Tibial artery (tissue), 4 donors: ENCODE measurements at regions of chr10 and their contacts with region 1.

Region 1: DNA sequence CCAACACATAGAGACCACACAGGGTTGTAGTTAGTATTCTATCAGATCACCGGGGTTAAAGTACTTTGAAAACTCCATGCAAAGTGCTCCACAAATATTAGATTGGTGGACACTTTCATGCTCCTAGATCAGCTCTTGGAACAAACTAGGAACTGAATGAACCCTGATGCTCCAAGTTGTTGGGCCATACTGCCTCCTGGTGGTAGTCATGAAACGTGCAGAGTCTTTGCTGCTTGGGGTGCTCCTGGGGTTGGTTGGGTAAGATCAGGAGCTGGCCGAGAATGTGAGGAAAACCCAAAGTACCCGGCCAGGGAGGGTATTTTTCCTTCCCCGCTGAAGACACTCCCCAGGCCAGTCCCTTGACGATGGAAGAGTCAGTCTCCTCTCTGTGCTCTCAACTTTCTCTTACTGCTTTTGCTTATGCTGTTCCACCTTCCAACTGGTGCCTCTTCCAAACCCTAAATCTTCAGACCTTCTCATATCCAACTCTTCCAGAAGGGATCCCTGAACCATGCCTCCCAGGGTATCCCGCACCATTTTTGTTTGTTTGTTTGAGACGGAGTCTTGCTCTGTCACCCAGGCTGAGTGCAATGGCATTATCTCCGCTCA is 920 bp upstream of the RPEL1 start:
- DNase-seq: peak; percentile 81 to 90
- H3K4me3 ChIP-seq: no peak overlapping the region
- H3K27ac ChIP-seq: no peak overlapping the region
- H3K4me1 ChIP-seq: peaks cover 0 to 15% (median 9%) of the 10 kb centered on the region in 4 donors
- H3K27me3 ChIP-seq: no peaks in the 10 kb centered on the region
- CTCF ChIP-seq: peak; percentile 79 to 92

Region 2: GRCh38 chr10:102729029-102730026 is 515.4 kb before region 1 on chr10:
- intact Hi-C with region 1: loop called (anchors 10 kb)
- DNase-seq: peak; percentile 88 to 93
- H3K4me3 ChIP-seq: no peak overlapping the region
- H3K27ac ChIP-seq: no peak overlapping the region
- H3K4me1 ChIP-seq: peaks cover 0 to 7% (median 0%) of the 10 kb centered on the region in 4 donors
- H3K27me3 ChIP-seq: no peaks in the 10 kb centered on the region
- CTCF ChIP-seq: peak; percentile 90 to 96

Region 3: GRCh38 chr10:102835007-102835482 is 409.7 kb before region 1 on chr10:
- intact Hi-C with region 1: loop called (anchors 10 kb)
- DNase-seq: peak; percentile 56 to 85
- H3K4me3 ChIP-seq: no peak overlapping the region
- H3K27ac ChIP-seq: no peak overlapping the region
- H3K4me1 ChIP-seq: peaks cover 0 to 14% (median 10%) of the 10 kb centered on the region in 4 donors
- H3K27me3 ChIP-seq: no peaks in the 10 kb centered on the region
- CTCF ChIP-seq: peak; percentile 80 to 84

Region 4: GRCh38 chr10:102917962-102918816 is 326.6 kb before region 1 on chr10 and contains the start of gene CNNM2:
- intact Hi-C with region 1: loop called (anchors 2 kb)
- DNase-seq: peak; percentile 100
- H3K4me3 ChIP-seq: peak within 1 kb of the TSS; percentile 90 to 93
- H3K27ac ChIP-seq: peak within 1 kb of the TSS; percentile 86 to 95
- H3K4me1 ChIP-seq: peaks cover 0 to 35% (median 11%) of the 10 kb centered on the region in 4 donors
- H3K27me3 ChIP-seq: no peaks in the 10 kb centered on the region
- CTCF ChIP-seq: no peak

Region 5: GRCh38 chr10:103069453-103070331 is 175.1 kb before region 1 on chr10:
- intact Hi-C with region 1: loop called (anchors 5 kb)
- DNase-seq: peak in 1 of 2 donors; percentile 76
- H3K4me3 ChIP-seq: no peak overlapping the region
- H3K27ac ChIP-seq: peak overlapping the region; percentile 3 to 20
- H3K4me1 ChIP-seq: peaks cover 0 to 14% (median 4%) of the 10 kb centered on the region in 4 donors
- H3K27me3 ChIP-seq: no peaks in the 10 kb centered on the region
- CTCF ChIP-seq: peak; percentile 62 to 74

Region 6: DNA sequence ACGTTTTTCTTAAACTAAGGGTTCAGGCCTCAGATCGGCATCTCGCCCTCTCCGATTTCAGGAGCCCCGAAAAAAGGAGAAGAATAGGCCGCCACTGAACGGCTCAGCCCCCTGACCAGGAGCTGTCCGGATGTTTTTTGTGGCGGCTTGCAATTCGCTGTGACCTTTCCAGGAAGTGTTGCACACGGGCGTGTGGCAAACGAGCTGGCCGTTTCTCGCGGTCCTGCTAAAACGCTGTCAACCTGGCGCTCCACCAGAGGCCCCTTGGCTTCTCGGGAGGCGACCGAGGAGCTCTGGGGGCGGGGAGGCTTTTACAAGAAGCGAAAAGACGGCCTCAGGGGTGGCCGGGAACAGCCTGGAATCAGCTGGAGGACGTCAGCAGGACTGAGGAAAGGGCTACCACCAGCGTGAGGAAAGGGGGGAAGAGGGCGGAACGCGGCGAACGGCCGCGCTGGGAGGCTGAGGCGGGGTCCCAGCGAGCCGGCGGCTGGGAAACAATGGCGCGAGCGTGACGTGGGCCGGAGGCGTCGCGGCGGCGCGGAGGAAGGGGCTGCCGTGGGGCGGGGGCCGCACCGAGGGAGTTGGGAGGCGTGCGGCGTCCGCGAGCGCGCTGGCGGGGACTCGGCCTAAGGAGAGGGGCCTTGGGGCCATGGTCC is 52.2 kb before region 1 on chr10:
- intact Hi-C with region 1: loop called (anchors 10 kb)
- DNase-seq: peak; percentile 85 to 92
- H3K4me3 ChIP-seq: peak overlapping the region; percentile 84 to 88
- H3K27ac ChIP-seq: peak overlapping the region; percentile 94 to 99
- H3K4me1 ChIP-seq: peaks cover 0 to 60% (median 34%) of the 10 kb centered on the region in 4 donors
- H3K27me3 ChIP-seq: no peaks in the 10 kb centered on the region
- CTCF ChIP-seq: no peak

Region 7: DNA sequence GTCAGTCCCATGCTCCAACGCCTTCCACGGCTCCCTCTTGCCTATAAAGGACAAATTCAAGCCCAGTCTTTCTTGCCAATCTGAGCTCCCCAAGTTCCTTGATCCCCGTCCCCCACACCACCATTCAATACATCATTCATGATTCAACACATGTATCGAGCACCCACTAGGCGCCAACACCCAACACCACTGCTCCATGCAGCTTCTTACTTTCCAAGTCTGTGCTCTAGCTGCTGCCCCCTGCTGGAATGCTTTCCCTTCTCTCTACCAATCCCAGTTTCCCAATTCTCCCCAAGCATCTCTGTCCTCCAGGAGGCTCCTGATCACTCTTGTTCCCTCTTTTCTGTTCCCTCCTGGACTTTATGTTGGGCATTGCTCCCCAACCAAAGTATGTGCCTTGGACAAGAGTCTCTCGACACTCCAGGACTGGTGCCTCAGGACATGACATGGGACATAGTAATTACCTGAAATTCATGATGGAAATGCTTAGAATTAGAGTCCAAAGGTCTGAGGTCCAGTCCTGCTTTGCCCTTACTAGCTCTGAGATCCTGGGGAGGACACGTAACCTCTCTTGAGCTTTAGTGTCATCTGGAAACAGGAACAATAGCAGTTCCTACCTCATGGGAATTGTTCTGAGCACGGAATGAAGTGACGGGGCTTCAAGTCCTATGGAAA is 421.5 kb after region 1 on chr10:
- intact Hi-C with region 1: no loop called
- DNase-seq: no peak
- H3K4me3 ChIP-seq: no peak overlapping the region
- H3K27ac ChIP-seq: no peak overlapping the region
- H3K4me1 ChIP-seq: peaks cover 0 to 47% (median 41%) of the 10 kb centered on the region in 4 donors
- H3K27me3 ChIP-seq: no peaks in the 10 kb centered on the region
- CTCF ChIP-seq: peak; percentile 21 to 27

Region 8: DNA sequence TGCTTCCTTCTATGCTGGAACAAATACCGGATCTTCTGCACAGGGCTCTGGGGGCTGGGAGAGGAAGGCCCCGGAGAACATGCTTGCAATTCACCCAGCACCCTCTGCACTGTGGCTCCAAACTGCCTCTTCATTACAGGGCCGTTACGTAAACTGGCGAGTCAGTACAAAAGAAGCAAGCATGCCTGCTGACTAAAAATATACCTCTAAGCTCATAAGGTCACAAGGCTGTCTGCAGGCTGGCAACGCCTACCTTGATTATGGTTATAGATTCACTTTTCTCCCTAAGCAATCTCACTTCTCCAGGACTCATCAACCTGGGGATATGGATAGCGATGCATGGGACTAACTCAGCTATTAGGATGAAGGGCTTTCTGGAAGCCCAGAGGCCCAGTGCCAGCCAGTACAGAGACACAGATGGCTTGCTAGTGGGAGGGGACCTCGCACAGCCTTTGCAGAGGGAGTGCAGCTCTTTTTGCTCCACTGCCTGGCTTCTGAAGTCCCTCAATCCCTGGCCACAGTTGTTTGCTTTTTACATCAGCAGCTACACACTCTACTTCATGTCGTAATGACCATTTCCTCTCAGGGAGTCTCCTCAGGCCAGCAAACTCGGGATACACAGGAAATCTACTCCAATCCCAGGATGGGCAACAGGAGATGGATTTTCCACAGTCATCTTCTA is 514.5 kb after region 1 on chr10:
- intact Hi-C with region 1: no loop called
- DNase-seq: peak; percentile 44 to 87
- H3K4me3 ChIP-seq: no peak overlapping the region
- H3K27ac ChIP-seq: peak overlapping the region; percentile 84
- H3K4me1 ChIP-seq: peaks cover 0 to 45% (median 33%) of the 10 kb centered on the region in 4 donors
- H3K27me3 ChIP-seq: no peaks in the 10 kb centered on the region
- CTCF ChIP-seq: peak in 1 of 2 experiments; percentile 32